ENCODE measurements at regions of chr16 and their contacts with region 1.

Region 1: DNA sequence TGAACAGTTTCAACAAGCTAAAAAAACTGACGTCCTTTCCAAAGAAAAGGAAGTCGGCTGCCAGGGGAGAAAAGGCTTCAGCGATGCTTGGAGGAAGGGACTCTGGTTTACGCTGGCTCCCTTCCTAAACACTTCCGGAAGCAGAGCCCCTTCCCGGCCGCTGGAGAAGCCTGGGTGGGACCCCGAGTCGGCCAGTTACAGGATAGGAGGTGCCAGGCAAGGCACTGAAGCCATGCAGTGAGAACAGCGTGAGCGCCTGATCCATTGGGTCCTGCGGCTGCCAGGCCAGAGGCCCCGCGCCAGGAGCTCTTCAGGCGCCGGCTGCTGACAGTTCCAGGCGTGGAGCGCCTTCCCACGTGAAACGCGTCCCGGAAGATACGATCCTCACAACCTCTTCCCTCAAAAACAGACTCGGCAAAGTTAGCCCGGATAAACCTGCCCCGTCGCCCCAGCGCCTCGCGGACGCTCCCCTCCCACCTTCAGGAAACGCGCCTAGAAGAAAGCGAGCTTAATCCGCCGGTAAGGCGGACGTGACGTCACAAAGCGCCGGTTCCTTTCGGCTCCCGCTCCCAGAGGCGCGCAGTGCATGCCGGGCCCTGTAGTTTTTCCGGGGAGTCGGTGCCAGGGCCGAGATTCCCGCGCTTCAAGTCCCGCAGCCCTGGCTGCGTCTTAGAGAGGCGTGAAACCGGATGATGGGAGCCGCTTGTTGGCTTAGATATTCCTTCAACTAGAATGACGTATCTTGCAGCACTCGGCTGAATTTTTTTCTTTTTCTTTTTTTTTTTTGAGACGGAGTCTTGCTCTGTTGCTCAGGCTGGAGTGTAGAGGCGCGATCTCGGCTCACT is at the start of gene ADAT1:
- DNase-seq: peak; percentile 87 to 99 (median 91)
- ATAC-seq: peak; percentile 92
- H3K4me3 ChIP-seq: peak within 1 kb of the TSS; percentile 62
- H3K27ac ChIP-seq: peak within 1 kb of the TSS; percentile 92
- H3K4me1 ChIP-seq: peaks cover 28 to 33% of the 10 kb centered on the region in 2 experiments
- H3K27me3 ChIP-seq: no peaks in the 10 kb centered on the region
- CTCF ChIP-seq: no peak
- EP300 ChIP-seq: no peak; the same call in 1 of the 2 replicates
- POLR2A ChIP-seq: peak; percentile 92
- RAD21 ChIP-seq: no peak
- polyA plus RNA-seq, gene ADAT1: 16.0 to 20.6 TPM

Region 2: GRCh38 chr16:75464130-75464918 is 158.7 kb before region 1 on chr16 and contains the start of gene TMEM170A:
- CTCF ChIA-PET with region 1: interaction called, 3 read pairs
- POLR2A ChIA-PET with region 1: no interaction called
- in situ Hi-C with region 1: no loop called
- intact Hi-C with region 1: loop called (anchors 2 kb)
- DNase-seq: peak; percentile 97 to 99 (median 97)
- ATAC-seq: peak; percentile 98
- H3K4me3 ChIP-seq: peak within 1 kb of the TSS; percentile 78
- H3K27ac ChIP-seq: peak within 1 kb of the TSS; percentile 92
- H3K4me1 ChIP-seq: peaks cover 3 to 9% of the 10 kb centered on the region in 2 experiments; a peak in 4 of 5 replicates
- H3K27me3 ChIP-seq: no peaks in the 10 kb centered on the region
- CTCF ChIP-seq: peak; percentile 100
- EP300 ChIP-seq: peak; percentile 22; the same call in 1 of the 2 replicates
- POLR2A ChIP-seq: peak; percentile 97
- RAD21 ChIP-seq: peak; percentile 84 to 87
- polyA plus RNA-seq, gene TMEM170A: 6.1 to 7.3 TPM

Region 3: DNA sequence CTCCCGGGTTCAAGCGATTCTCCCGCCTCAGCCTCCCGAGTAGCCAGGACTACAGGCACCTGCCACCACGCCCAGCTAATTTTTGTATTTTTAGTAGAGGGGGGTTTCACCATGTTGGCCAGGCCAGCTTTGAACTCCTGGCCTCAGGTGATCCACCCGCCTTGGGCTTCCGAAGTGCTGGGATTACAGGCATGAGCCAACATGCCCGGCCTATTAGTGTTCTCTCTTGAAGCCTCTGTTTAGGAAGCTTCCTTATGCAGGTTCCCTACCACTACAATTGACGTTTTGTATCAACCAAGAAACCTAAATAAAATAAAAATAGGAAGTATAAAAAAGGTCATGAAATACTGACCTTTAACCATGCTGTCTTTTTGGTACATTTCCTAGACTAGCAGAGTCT is 103.1 kb before region 1 on chr16:
- CTCF ChIA-PET with region 1: no interaction called
- POLR2A ChIA-PET with region 1: interaction called, 4 read pairs
- in situ Hi-C with region 1: no loop called
- intact Hi-C with region 1: loop called (anchors 1 kb)
- DNase-seq: no peak
- ATAC-seq: no peak
- H3K4me3 ChIP-seq: no peak overlapping the region
- H3K27ac ChIP-seq: no peak overlapping the region
- H3K4me1 ChIP-seq: peaks cover 0 to 14% of the 10 kb centered on the region in 2 experiments; a peak in 3 of 5 replicates
- H3K27me3 ChIP-seq: peaks cover 8 to 14% of the 10 kb centered on the region in 2 experiments; a peak in 4 of 5 replicates
- CTCF ChIP-seq: no peak
- EP300 ChIP-seq: no peak
- POLR2A ChIP-seq: no peak
- RAD21 ChIP-seq: no peak

Region 4: DNA sequence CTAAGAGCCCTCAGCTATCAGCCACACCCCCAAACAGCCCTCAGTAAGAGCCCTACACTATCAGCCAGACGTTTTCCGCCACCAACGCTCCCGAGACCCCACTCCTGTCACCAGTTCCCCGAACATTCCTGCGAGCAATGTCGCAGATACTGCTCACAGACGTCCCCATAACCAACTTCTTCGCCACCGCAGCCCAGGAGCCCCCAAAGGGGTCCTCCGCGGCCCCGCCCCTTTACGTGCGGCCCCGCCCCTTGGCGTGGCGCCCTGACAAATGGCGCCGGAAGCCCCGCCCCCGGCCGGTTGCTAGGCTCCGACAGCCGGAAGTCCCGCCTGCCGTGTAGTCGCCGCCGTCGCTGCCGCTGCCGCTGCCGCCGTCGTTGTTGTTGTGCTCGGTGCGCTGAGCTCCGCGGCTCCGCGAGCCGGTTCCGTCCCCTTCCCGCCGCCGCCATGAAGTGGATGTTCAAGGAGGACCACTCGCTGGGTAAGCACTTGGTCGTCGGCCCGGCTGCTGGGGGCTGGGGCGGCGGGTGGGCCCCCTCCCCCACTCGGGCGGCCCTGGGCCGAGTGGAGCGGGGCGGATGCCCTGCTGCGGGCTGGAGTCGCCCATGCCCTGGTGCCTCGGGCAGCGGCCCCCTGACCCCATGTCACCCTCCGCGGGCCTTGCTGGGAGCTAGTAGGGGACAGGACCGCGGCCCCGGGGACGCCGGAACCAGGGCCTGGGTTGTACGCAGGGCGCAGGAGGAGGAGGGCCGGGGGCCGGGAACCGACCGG is 56.8 kb before region 1 on chr16 and contains the start of gene GABARAPL2:
- CTCF ChIA-PET with region 1: no interaction called
- POLR2A ChIA-PET with region 1: interaction called, 4 read pairs
- in situ Hi-C with region 1: no loop called
- intact Hi-C with region 1: loop called (anchors 1 kb)
- DNase-seq: peak; percentile 87 to 92 (median 90)
- ATAC-seq: peak; percentile 89
- H3K4me3 ChIP-seq: peak within 1 kb of the TSS; percentile 95
- H3K27ac ChIP-seq: peak within 1 kb of the TSS; percentile 74
- H3K4me1 ChIP-seq: peaks cover 15 to 28% of the 10 kb centered on the region in 2 experiments; a peak in 4 of 5 replicates
- H3K27me3 ChIP-seq: no peaks in the 10 kb centered on the region
- CTCF ChIP-seq: no peak
- EP300 ChIP-seq: no peak
- POLR2A ChIP-seq: peak; percentile 68
- RAD21 ChIP-seq: no peak
- polyA plus RNA-seq, gene GABARAPL2: 252 to 288 TPM

Region 5: GRCh38 chr16:75647492-75648264 is 24.7 kb after region 1 on chr16 and contains the starts of genes KARS1 and TERF2IP:
- CTCF ChIA-PET with region 1: interaction called, 3 read pairs
- POLR2A ChIA-PET with region 1: interaction called, 6 read pairs
- in situ Hi-C with region 1: no loop called
- intact Hi-C with region 1: loop called (anchors 2 kb)
- DNase-seq: peak; percentile 91 to 96 (median 94)
- ATAC-seq: peak; percentile 93
- H3K4me3 ChIP-seq: peak within 1 kb of the TSS; percentile 96
- H3K27ac ChIP-seq: peak within 1 kb of the TSS; percentile 93
- H3K4me1 ChIP-seq: peaks cover 15 to 24% of the 10 kb centered on the region in 2 experiments; a peak in 4 of 5 replicates
- H3K27me3 ChIP-seq: no peaks in the 10 kb centered on the region
- CTCF ChIP-seq: no peak
- EP300 ChIP-seq: no peak
- POLR2A ChIP-seq: peak; percentile 96
- RAD21 ChIP-seq: no peak
- polyA plus RNA-seq, gene KARS1: 223 to 313 TPM
- polyA plus RNA-seq, gene TERF2IP: 14.5 to 14.8 TPM